ENCODE measurements at regions of chr7 and their contacts with region 1.

Region 1: DNA sequence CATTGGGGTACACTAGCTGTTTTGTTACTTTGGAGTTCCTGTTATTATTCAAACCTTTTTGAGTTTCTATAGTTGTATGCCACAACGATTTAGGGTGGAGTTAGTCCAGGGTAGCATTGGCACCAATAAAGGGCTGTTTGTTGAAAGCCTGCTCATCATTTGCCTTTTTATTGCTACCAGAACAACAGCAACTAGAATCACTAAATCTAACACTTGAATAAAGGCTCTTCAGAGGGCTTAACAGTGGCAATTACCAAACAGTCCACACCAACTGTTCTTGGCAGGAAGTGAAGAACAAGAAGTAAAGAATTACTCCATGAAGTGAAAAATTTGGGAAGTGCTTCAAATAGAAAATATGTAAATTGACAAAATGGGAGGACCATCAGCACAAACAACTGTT is 621.4 kb downstream of the PHTF2 start:
- DNase-seq: no peak
- H3K27ac ChIP-seq: no peak overlapping the region
- CTCF ChIP-seq: no peak

Region 2: GRCh38 chr7:78311181-78311580 is 108.8 kb before region 1 on chr7:
- CTCF ChIA-PET with region 1: no interaction called
- POLR2A ChIA-PET with region 1: no interaction called
- DNase-seq: no peak
- H3K27ac ChIP-seq: no peak overlapping the region
- CTCF ChIP-seq: no peak

Region 3: DNA sequence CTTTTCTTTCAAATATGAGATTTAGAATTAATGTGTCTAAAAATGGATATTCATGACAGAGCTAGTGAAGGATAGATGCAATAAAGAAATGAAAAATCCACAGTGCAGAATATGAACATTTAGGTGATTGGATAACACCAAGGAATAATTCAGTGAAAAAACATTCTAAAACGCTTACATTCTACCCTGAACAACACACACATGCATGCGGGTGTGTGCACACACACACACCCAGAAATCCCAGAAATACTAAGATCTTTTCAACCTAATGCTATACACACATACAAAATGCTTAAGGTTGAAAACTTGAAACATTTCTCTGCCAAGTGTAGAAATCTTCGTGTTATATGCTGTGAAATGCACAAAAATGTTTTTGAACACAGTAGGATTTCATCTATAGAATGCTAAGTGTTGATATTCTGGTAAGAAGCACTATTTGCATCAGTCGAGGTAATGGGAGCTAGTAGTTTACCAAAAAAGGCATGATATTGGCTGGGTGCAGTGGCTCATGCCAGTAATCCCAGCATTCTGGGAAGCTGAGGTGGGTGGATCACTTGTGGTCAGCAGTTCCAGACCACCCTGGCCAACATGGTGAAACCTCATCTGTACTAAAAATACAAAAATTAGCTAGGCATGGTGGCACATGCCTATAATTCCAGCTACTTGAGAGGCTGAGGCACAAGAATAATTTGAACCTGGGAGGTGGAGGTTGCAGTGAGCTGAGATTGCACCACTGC is 20.8 kb before region 1 on chr7:
- CTCF ChIA-PET with region 1: no interaction called
- POLR2A ChIA-PET with region 1: interaction called, 11 read pairs
- DNase-seq: no peak
- H3K27ac ChIP-seq: no peak overlapping the region
- CTCF ChIP-seq: no peak